Esophagus squamous epithelium (tissue), 5 donors: ENCODE measurements at regions of chr4 and their contacts with region 1.

Region 1: DNA sequence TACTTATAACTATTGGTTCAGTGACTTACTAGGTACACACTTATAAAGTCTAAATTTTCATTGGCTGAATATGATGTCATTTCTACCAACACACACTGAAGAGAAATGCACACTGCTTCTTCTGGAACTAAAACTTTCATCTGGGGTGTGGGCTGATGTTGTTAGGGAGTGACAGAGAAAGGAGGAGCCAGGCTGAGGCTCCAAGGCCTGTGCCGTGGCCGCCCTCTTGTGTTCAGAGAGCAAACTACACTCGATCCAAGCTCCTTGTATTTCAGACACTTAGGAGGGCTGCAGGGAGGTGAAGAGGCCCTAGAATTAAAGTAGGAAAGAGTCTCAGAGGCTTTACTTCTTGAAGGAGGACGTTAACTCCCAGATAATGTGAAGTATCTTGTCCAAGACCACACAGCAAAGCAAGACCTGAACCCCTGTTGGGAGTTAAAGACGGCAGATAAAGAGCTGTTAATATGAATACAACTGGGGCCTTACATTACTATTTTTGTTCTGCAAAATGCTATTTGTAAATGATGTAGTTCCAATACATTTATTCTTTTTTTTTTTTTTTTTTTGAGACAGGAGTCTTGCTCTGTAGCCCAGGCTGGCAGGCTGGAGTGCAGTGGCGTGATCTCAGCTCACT is 137.5 kb downstream of the AFAP1 start:
- DNase-seq: no peak
- H3K4me3 ChIP-seq: no peak overlapping the region
- H3K27ac ChIP-seq: no peak overlapping the region
- H3K4me1 ChIP-seq: peaks cover 0 to 37% (median 20%) of the 10 kb centered on the region in 3 donors
- H3K27me3 ChIP-seq: no peaks in the 10 kb centered on the region
- CTCF ChIP-seq: peak; percentile 61 to 92 (median 86)
- POLR2A ChIP-seq: no peak

Region 2: DNA sequence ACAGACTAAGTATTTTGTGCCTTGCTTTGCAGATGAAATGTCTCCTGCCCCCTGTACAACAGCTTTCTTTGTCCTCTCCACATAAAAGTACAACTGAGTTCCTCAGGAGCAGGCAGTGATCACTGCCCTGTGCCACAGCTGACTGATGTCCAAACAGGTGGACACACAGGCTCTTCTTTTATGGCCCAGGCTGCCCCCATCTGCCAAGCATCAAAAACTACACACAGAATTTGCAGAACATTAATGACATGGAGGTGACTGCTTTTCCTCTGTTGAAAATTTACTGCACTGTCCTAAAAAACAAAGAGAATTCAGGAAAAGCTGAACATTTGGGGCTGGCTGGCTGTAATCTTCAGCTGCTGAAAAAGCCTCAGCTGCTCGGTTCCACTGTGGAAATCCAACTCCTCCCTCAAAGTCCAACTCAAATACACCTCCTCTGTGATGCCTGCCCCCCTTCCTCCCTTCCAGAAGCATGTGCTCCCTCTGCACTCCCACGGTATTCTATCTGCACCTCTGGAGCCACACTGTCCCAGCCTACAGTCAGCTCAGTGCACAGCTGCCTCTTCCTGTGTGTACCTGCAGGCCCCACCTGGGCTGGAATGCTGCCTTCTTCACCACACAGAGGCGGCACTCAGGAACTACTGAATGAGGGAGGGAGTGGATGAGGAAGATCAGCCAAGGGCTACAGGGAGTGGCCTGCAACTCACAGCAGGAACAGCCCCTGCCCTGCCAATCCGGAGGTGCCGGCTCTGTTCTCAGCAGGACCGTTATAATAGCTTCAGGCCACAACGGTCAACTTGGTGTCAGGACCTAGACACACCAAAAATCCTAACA is 127.1 kb after region 1 on chr4:
- intact Hi-C with region 1: loop called (anchors 10 kb)
- DNase-seq: no peak
- H3K4me3 ChIP-seq: no peak overlapping the region
- H3K27ac ChIP-seq: peak overlapping the region; percentile 20 to 81 (median 58)
- H3K4me1 ChIP-seq: peaks cover 0 to 74% (median 30%) of the 10 kb centered on the region in 3 donors
- H3K27me3 ChIP-seq: no peaks in the 10 kb centered on the region
- CTCF ChIP-seq: peak in 1 of 6 experiments; percentile 2
- POLR2A ChIP-seq: no peak

Region 3: DNA sequence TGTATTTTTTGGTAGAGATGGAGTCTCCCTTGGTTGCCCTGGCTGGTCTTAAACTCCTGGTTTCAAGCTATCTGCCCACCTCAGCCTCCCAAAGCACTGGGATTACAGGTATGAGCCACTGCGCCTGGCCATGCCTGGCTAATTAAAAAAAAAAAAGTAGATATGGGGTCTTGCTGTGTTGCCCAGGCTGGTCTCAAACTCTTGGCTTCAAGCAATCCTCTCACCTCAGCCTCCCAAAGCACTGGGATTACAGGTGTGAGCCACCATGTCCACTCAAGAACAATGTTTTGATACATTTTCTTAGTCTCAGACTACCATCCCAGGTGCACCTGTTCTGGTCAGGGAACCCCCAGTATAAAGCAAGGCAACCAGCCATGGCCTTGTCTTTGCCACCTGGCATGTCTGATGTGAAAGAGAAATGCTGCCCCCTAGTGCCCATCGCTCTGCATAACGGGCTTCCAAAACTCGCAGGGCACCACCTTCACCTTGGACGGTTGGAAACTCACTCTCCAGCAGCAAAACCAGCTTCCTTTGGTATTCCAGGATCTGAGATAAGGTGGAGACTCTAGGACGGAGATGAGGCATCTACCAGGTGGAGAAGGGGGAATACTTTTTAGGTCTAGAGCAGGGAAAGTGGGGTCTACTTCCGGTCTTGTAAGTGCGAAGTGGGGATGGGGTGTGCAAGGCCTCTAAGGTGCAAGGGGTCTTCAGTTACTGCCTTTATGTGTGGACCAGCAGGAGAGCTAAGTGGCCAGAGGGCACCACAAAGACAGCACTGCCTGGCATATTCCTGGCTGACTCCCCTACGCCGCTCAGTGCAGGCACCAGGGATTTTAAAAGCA is 185.2 kb after region 1 on chr4:
- intact Hi-C with region 1: loop called (anchors 2 kb)
- DNase-seq: no peak
- H3K4me3 ChIP-seq: no peak overlapping the region
- H3K27ac ChIP-seq: no peak overlapping the region
- H3K4me1 ChIP-seq: peaks cover 3 to 10% (median 3%) of the 10 kb centered on the region in 3 donors
- H3K27me3 ChIP-seq: peaks cover 0 to 26% (median 0%) of the 10 kb centered on the region in 4 donors
- CTCF ChIP-seq: peak; percentile 76 to 91 (median 87)
- POLR2A ChIP-seq: no peak